ENCODE measurements at regions of chr2 and their contacts with region 1.

Region 1: DNA sequence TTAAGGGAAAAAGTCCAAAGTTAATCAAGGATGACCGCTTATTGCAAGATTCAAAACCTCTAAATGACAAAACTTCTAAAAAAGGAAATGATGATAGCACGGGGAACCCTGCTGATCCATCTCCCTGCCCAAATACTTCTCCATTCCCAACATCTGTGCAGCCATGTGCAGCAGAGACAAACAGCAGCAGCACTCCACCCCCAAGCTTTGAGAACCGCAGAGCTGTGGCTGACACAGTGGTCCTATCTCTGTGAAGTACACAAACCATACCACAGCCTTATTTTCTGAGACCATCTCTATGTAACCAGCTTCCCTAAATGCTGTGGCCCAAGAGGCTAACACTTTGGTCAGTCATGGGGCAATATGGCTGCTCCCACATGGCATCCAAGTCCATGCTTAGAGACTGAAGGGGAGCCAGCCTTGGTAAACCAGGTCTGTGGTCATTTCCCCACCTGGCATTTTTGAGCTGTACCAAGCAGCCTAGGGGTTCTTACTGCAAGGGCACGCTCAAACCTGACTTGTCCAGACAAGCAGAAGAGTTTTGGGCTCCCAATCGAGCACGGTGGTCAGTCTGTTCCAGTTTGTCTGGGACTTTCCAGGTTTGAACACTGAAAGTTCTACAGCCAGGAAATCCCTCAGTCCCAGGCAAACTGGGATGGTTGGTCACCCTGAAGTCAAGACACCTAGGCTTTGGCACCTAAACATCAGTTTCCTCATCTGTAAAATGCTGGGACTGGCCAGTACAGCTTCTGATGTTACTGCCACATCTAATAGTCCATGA is 17.1 kb upstream of the NFE2L2 start:
- DNase-seq: peak; percentile 53
- ATAC-seq: peak; percentile 68
- H3K4me3 ChIP-seq: no peak overlapping the region
- H3K4me3 Mint-ChIP-seq: peak overlapping the region; percentile 40
- H3K27ac ChIP-seq: no peak overlapping the region
- H3K27ac Mint-ChIP-seq: peak overlapping the region; percentile 82
- H3K4me1 ChIP-seq: peaks cover 14 to 27% of the 10 kb centered on the region in 2 donors
- H3K4me1 Mint-ChIP-seq: peaks cover 34% of the 10 kb centered on the region
- H3K27me3 ChIP-seq: no peaks in the 10 kb centered on the region
- H3K27me3 Mint-ChIP-seq: no peaks in the 10 kb centered on the region
- CTCF ChIP-seq: no peak

Region 2: DNA sequence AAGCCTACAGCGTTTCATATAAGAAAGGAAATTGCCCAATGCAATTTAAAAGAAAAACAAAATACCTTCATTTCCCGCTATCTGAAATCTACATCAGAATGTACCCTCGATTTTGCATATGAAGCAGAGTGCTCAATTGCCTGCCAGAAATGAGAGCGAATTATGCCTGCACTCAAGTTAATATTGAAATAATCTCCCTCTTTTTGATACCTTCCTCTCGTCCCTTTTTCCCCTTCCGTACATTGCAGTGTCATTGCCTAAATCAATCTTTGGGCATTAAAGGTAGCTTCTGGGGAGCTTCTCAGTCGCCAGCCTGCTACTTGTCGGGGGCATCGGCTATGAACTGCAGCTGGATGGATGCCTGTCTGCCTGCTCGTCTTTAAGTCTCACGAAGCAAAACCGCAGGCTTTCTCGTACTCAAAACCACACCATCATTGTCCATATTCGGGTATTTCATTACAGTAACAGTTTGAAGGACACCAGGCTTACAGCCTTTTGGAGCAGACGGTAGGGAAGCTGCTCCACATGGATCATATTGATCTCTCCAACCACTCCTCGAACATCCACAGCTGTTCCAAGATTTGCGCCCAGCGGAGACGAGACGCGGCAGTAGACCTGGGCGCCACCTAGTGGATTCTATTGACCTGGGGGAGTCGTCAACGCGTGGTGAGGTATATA is 133.0 kb before region 1 on chr2:
- CTCF ChIA-PET with region 1: interaction called, 13 read pairs
- POLR2A ChIA-PET with region 1: no interaction called
- intact Hi-C with region 1: no loop called
- DNase-seq: peak; percentile 85
- ATAC-seq: peak; percentile 92
- H3K4me3 ChIP-seq: peak overlapping the region; percentile 42 to 94 (median 67)
- H3K4me3 Mint-ChIP-seq: peak overlapping the region; percentile 92
- H3K27ac ChIP-seq: no peak overlapping the region
- H3K27ac Mint-ChIP-seq: peak overlapping the region; percentile 2
- H3K4me1 ChIP-seq: peaks cover 9 to 13% of the 10 kb centered on the region in 2 donors
- H3K4me1 Mint-ChIP-seq: peaks cover 11% of the 10 kb centered on the region
- H3K27me3 ChIP-seq: peaks cover 0 to 13% (median 10%) of the 10 kb centered on the region in 4 experiments
- H3K27me3 Mint-ChIP-seq: peaks cover 36% of the 10 kb centered on the region
- CTCF ChIP-seq: peak; percentile 99

Region 3: DNA sequence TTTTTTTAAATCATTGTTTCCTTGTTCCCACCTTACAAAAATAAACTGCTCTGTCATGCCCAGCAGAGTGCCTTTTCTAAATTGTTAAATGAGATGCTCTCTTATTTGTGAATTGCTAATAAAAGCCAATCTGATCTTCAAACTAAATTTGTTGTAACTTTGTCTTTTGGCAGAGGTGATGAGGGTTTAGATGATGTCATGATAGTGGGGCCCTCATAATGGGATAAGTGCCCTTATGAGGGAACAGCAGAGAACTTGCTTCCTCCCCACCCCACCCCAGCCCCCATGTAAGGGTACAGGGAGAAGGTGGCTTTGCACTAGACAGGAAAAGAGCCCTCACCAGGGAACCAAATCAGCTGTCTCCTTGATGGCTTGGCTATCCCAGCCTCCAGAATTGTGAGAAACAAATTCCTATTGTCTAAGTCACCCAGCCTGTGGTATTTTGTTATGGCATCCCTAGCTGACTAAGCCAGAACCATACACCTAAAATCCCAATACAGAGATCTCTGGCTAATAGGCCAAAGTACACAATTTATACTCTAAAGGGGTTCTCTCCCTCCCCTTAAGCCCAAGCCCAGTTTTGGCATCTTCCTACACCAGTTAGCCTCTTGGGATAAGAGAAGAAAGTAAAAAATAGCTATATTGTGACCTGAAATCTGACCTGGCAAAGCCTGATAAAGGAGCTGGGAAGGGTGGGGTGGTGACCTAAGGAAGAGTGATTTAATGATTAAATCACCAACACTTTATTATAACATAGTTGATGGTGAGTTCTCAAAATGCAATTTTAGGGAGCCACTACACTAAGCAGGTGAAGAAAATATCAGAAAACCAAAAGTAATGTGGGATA is 109.3 kb before region 1 on chr2:
- CTCF ChIA-PET with region 1: no interaction called
- POLR2A ChIA-PET with region 1: no interaction called
- intact Hi-C with region 1: no loop called
- DNase-seq: no peak
- ATAC-seq: no peak
- H3K4me3 ChIP-seq: no peak overlapping the region
- H3K4me3 Mint-ChIP-seq: no peak overlapping the region
- H3K27ac ChIP-seq: no peak overlapping the region
- H3K27ac Mint-ChIP-seq: no peak overlapping the region
- H3K4me1 ChIP-seq: peaks cover 0 to 2% of the 10 kb centered on the region in 2 donors
- H3K4me1 Mint-ChIP-seq: peaks cover 15% of the 10 kb centered on the region
- H3K27me3 ChIP-seq: no peaks in the 10 kb centered on the region
- H3K27me3 Mint-ChIP-seq: no peaks in the 10 kb centered on the region
- CTCF ChIP-seq: no peak

Region 4: DNA sequence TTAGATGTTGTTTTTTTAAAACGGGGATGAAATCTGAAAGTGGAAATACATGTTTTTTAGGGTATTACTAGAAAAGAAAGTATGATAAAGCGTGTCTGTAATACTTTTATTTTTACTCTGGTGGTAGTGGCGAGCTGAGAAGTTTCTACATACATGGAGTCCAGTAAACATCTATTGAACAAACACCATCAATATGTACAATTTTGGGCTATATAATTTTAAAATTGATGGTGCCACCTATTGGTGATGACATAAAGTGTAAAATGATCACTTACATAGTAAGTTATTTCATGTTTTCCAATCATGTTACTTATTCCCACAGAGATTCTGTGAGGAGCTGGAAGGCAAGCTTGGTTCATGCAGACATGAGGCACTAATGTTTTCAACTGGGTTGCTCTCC is 14.4 kb after region 1 on chr2:
- CTCF ChIA-PET with region 1: interaction called, 27 read pairs
- POLR2A ChIA-PET with region 1: no interaction called
- intact Hi-C with region 1: no loop called
- DNase-seq: peak; percentile 66
- ATAC-seq: peak; percentile 45
- H3K4me3 ChIP-seq: no peak overlapping the region
- H3K4me3 Mint-ChIP-seq: no peak overlapping the region
- H3K27ac ChIP-seq: no peak overlapping the region
- H3K27ac Mint-ChIP-seq: no peak overlapping the region
- H3K4me1 ChIP-seq: peaks cover 0 to 2% of the 10 kb centered on the region in 2 donors
- H3K4me1 Mint-ChIP-seq: peaks cover 4% of the 10 kb centered on the region
- H3K27me3 ChIP-seq: no peaks in the 10 kb centered on the region
- H3K27me3 Mint-ChIP-seq: no peaks in the 10 kb centered on the region
- CTCF ChIP-seq: peak; percentile 69

Region 5: GRCh38 chr2:177460973-177461585 is 179.5 kb after region 1 on chr2:
- CTCF ChIA-PET with region 1: no interaction called
- POLR2A ChIA-PET with region 1: no interaction called
- intact Hi-C with region 1: no loop called
- DNase-seq: no peak
- ATAC-seq: no peak
- H3K4me3 ChIP-seq: no peak overlapping the region
- H3K4me3 Mint-ChIP-seq: no peak overlapping the region
- H3K27ac ChIP-seq: no peak overlapping the region
- H3K27ac Mint-ChIP-seq: no peak overlapping the region
- H3K4me1 ChIP-seq: no peaks in the 10 kb centered on the region
- H3K4me1 Mint-ChIP-seq: no peaks in the 10 kb centered on the region
- H3K27me3 ChIP-seq: no peaks in the 10 kb centered on the region
- H3K27me3 Mint-ChIP-seq: no peaks in the 10 kb centered on the region
- CTCF ChIP-seq: no peak

Measured in B cell (primary cell).